Calu3 (cell line): ENCODE measurements at regions of chr16 and their contacts with region 1.

Region 1: DNA sequence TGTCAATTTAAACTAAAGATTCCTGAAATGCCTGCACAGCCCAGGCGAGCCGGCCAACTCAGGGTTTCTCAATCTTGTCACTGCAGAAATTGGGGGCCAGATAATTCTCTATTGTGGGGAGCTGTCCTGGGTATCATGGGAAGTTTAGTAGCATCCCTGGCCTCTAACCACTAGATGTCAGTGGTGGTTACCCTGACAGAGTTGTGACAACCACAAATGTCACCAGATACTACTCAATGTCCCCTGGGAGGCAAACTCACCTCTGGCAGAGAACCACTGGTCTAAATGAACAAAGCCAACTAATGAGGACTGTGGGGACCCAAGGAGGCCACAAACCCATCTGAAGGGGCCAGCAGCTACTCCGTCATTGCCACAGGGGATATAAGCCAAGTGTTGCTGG is 90.9 kb downstream of the MYH11 start:
- DNase-seq: peak; percentile 56
- H3K4me3 Mint-ChIP-seq: no peak overlapping the region
- H3K27ac Mint-ChIP-seq: no peak overlapping the region
- H3K4me1 Mint-ChIP-seq: no peaks in the 10 kb centered on the region
- H3K27me3 Mint-ChIP-seq: peaks cover 34% of the 10 kb centered on the region
- CTCF ChIP-seq: peak; percentile 63

Region 2: DNA sequence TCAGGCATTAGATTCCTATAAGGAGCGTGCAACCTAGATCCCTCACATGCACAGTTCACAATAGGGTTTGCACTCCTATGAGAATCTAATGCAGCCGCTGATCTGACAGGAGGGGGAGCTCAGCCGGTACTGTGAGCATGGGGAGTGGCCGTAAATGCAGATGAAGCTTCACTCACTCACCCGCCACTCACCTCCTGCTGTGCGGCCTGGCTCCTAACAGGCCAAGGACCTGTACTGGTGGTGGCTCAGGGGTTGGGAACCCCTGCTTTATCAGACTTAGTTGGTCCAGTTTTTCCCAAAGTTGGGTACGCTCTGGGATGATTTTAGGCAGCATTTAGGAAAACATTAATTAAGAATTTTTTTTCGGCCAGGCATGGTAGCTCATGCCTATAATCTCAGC is 226.7 kb before region 1 on chr16:
- CTCF ChIA-PET with region 1: no interaction called
- intact Hi-C with region 1: no loop called
- DNase-seq: no peak
- H3K4me3 Mint-ChIP-seq: no peak overlapping the region
- H3K27ac Mint-ChIP-seq: no peak overlapping the region
- H3K4me1 Mint-ChIP-seq: no peaks in the 10 kb centered on the region
- H3K27me3 Mint-ChIP-seq: peaks cover 28% of the 10 kb centered on the region
- CTCF ChIP-seq: no peak

Region 3: DNA sequence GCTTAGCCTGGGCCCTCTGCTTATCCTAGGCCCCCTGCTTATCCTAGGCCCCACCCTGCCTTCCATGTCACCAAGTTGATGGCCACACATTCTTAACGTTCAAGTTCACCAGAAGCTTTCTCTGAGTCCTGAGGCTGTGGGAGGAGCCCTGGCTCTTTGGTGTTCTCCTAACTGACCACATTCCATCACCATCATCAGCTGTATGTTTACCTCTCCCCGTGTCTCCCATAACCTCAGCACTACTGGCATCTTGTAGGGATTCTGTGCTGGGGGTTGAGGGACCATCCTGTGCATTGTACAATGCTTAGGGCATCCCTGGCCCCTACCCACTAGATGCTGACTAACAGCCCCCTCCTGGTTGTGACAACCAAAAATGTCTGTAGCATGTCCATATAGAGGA is 16.5 kb before region 1 on chr16:
- CTCF ChIA-PET with region 1: no interaction called
- intact Hi-C with region 1: no loop called
- DNase-seq: no peak
- H3K4me3 Mint-ChIP-seq: no peak overlapping the region
- H3K27ac Mint-ChIP-seq: no peak overlapping the region
- H3K4me1 Mint-ChIP-seq: no peaks in the 10 kb centered on the region
- H3K27me3 Mint-ChIP-seq: peaks cover 38% of the 10 kb centered on the region
- CTCF ChIP-seq: no peak

Region 4: GRCh38 chr16:15822957-15823356 is 57.1 kb after region 1 on chr16:
- CTCF ChIA-PET with region 1: interaction called, 9 read pairs
- intact Hi-C with region 1: loop called (anchors 5 kb)
- DNase-seq: no peak
- H3K4me3 Mint-ChIP-seq: no peak overlapping the region
- H3K27ac Mint-ChIP-seq: no peak overlapping the region
- H3K4me1 Mint-ChIP-seq: no peaks in the 10 kb centered on the region
- H3K27me3 Mint-ChIP-seq: peaks cover 39% of the 10 kb centered on the region
- CTCF ChIP-seq: no peak

Region 5: GRCh38 chr16:16127469-16128116 is 361.7 kb after region 1 on chr16:
- CTCF ChIA-PET with region 1: interaction called, 3 read pairs
- intact Hi-C with region 1: loop called (anchors 1 kb)
- DNase-seq: peak; percentile 84
- H3K4me3 Mint-ChIP-seq: no peak overlapping the region
- H3K27ac Mint-ChIP-seq: no peak overlapping the region
- H3K4me1 Mint-ChIP-seq: no peaks in the 10 kb centered on the region
- H3K27me3 Mint-ChIP-seq: no peaks in the 10 kb centered on the region
- CTCF ChIP-seq: peak; percentile 92

Region 6: GRCh38 chr16:16191493-16192167 is 425.8 kb after region 1 on chr16:
- CTCF ChIA-PET with region 1: no interaction called
- intact Hi-C with region 1: loop called (anchors 2 kb)
- DNase-seq: no peak
- H3K4me3 Mint-ChIP-seq: no peak overlapping the region
- H3K27ac Mint-ChIP-seq: no peak overlapping the region
- H3K4me1 Mint-ChIP-seq: no peaks in the 10 kb centered on the region
- H3K27me3 Mint-ChIP-seq: peaks cover 23% of the 10 kb centered on the region
- CTCF ChIP-seq: no peak